ENCODE measurements at regions of chr5 and their contacts with region 1.

Region 1: GRCh38 chr5:180784497-180785097 is 18.0 kb downstream of the MGAT1 start:
- DNase-seq: peak; percentile 57
- H3K4me3 ChIP-seq: no peak overlapping the region
- H3K27ac ChIP-seq: no peak overlapping the region
- H3K4me1 ChIP-seq: peaks cover 21% of the 10 kb centered on the region
- H3K27me3 ChIP-seq: no peaks in the 10 kb centered on the region
- CTCF ChIP-seq: peak; percentile 86 to 91

Region 2: GRCh38 chr5:180315762-180316212 is 468.8 kb before region 1 on chr5:
- CTCF ChIA-PET with region 1: no interaction called
- dilution Hi-C with region 1: no loop called
- in situ Hi-C with region 1: no loop called
- intact Hi-C with region 1: no loop called
- DNase-seq: peak; percentile 12
- H3K4me3 ChIP-seq: no peak overlapping the region
- H3K27ac ChIP-seq: no peak overlapping the region
- H3K4me1 ChIP-seq: no peaks in the 10 kb centered on the region
- H3K27me3 ChIP-seq: no peaks in the 10 kb centered on the region
- CTCF ChIP-seq: peak; percentile 62 to 86

Region 3: GRCh38 chr5:180366326-180366725 is 418.3 kb before region 1 on chr5:
- CTCF ChIA-PET with region 1: no interaction called
- dilution Hi-C with region 1: no loop called
- in situ Hi-C with region 1: no loop called
- intact Hi-C with region 1: no loop called
- DNase-seq: no peak
- H3K4me3 ChIP-seq: no peak overlapping the region
- H3K27ac ChIP-seq: no peak overlapping the region
- H3K4me1 ChIP-seq: no peaks in the 10 kb centered on the region
- H3K27me3 ChIP-seq: no peaks in the 10 kb centered on the region
- CTCF ChIP-seq: no peak

Region 4: GRCh38 chr5:180810210-180810958 is 25.8 kb after region 1 on chr5:
- CTCF ChIA-PET with region 1: no interaction called
- dilution Hi-C with region 1: no loop called
- in situ Hi-C with region 1: no loop called
- intact Hi-C with region 1: loop called (anchors 2 kb)
- DNase-seq: peak; percentile 94
- H3K4me3 ChIP-seq: peak overlapping the region; percentile 71 to 99 (median 85)
- H3K27ac ChIP-seq: peak overlapping the region; percentile 60
- H3K4me1 ChIP-seq: peaks cover 44% of the 10 kb centered on the region
- H3K27me3 ChIP-seq: no peaks in the 10 kb centered on the region
- CTCF ChIP-seq: no peak

Region 5: GRCh38 chr5:180831139-180832048 is 46.8 kb after region 1 on chr5:
- CTCF ChIA-PET with region 1: interaction called, 4 read pairs
- dilution Hi-C with region 1: no loop called
- in situ Hi-C with region 1: no loop called
- intact Hi-C with region 1: loop called (anchors 2 kb)
- DNase-seq: peak; percentile 40
- H3K4me3 ChIP-seq: peak overlapping the region; percentile 49 to 69 (median 62)
- H3K27ac ChIP-seq: peak overlapping the region; percentile 75
- H3K4me1 ChIP-seq: peaks cover 27% of the 10 kb centered on the region
- H3K27me3 ChIP-seq: no peaks in the 10 kb centered on the region
- CTCF ChIP-seq: peak in 1 of 2 donors; percentile 20

Region 6: DNA sequence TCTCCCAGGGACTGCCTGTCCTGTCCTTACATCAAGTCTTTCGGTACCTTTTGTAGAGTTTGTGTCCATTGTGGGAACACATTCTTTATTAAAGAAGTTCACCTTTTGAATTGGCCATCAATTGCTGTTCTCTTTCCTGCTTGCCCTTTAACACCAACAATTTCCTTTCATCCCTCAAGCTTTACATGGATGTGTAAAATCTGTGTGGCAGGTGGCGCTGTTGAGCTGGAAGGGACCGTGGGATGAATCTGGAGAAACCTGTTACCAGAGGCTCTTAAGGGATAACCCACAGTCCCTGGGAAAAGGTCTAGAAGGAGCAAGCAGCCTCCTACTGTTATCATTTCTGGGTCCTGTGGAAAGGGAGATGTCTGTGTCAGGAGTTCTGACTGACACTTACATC is 84.4 kb after region 1 on chr5:
- CTCF ChIA-PET with region 1: no interaction called
- dilution Hi-C with region 1: no loop called
- in situ Hi-C with region 1: no loop called
- intact Hi-C with region 1: loop called (anchors 1 kb)
- DNase-seq: peak; percentile 68
- H3K4me3 ChIP-seq: no peak overlapping the region
- H3K27ac ChIP-seq: no peak overlapping the region
- H3K4me1 ChIP-seq: no peaks in the 10 kb centered on the region
- H3K27me3 ChIP-seq: no peaks in the 10 kb centered on the region
- CTCF ChIP-seq: peak; percentile 78 to 93

Region 7: DNA sequence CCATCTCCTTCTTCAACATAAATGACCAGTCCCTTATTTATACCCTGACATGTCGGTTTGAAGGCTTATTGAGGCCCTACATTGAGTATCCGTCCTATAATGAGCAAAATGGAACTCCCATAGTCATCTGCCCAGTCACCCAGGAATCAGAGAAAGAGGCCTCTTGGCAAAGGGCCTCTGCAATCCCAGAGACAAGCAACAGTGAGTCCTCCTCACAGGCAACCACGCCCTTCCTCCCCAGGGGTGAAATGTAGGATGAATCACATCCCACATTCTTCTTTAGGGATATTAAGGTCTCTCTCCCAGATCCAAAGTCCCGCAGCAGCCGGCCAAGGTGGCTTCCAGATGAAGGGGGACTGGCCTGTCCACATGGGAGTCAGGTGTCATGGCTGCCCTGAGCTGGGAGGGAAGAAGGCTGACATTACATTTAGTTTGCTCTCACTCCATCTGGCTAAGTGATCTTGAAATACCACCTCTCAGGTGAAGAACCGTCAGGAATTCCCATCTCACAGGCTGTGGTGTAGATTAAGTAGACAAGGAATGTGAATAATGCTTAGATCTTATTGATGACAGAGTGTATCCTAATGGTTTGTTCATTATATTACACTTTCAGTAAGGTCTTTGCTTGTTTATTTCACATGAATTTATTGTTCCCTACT is 165.8 kb after region 1 on chr5:
- CTCF ChIA-PET with region 1: no interaction called
- dilution Hi-C with region 1: no loop called
- in situ Hi-C with region 1: no loop called
- intact Hi-C with region 1: loop called (anchors 10 kb)
- DNase-seq: peak; percentile 36
- H3K4me3 ChIP-seq: no peak overlapping the region
- H3K27ac ChIP-seq: no peak overlapping the region
- H3K4me1 ChIP-seq: no peaks in the 10 kb centered on the region
- H3K27me3 ChIP-seq: no peaks in the 10 kb centered on the region
- CTCF ChIP-seq: no peak